GM18951 (cell line): ENCODE measurements at regions of chr1 and their contacts with region 1.

Region 1: GRCh38 chr1:32234792-32235191 is 12.2 kb upstream of the FAM167B start:
- POLR2A ChIP-seq: no peak

Region 2: DNA sequence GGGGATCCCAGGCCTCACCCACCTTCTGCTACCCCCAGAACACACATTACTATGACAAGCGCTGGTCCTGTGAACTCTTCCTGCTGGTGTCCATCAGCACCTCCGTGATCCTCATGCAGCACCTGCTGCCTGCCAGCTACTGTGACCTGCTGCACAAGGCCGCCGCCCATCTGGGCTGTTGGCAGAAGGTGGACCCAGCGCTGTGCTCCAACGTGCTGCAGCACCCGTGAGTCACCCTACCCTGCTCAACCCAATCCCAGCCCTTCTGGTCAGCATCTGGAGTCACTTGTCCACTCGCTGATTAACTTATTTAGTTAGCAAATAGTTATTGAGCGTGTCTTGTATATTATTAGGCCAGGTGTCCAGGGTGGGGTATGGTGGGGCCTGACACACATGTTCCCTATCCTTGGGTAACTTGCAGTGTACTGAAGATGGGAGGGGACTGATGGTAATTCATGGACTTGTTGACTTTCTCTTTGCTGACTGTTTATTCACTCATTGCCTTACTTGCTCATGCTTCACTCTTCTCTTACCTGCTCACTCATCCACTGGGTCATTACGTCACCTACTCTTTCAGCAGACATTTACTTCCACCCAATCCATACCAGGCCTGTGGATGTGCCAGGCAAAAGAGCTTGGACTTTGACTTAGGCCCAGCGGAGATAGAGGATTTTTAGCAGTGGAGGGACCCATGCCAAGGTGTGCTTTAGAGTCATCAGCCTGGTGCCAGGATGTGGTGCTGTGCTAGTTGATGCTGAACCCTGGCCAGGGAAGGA is 139.9 kb before region 1 on chr1:
- in situ Hi-C with region 1: no loop called
- POLR2A ChIP-seq: no peak

Region 3: GRCh38 chr1:32179443-32180185 is 55.2 kb before region 1 on chr1 and contains the start of gene TXLNA:
- in situ Hi-C with region 1: no loop called
- POLR2A ChIP-seq: peak; percentile 94

Region 4: DNA sequence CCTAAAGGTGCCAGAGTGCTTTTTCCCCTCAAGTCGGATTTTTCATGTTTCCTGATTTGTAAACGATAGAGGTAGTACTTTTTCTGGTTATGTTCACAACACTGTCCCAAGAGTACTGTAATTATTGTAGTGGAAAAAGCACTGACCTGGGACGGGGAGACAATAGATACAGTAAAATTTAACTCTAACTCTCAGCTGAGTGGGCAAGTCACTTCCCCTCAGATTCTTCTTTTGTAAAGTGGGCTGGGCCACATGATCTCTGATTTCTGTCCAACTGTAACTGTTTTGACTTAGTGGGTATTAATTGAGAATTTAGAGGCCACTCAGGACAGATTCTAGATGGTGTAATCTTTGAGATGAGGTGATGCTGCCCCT is 82.1 kb after region 1 on chr1:
- in situ Hi-C with region 1: loop called (anchors 5 kb)
- POLR2A ChIP-seq: no peak

Region 5: GRCh38 chr1:32351399-32352238 is 116.8 kb after region 1 on chr1:
- in situ Hi-C with region 1: no loop called
- POLR2A ChIP-seq: peak; percentile 85